Activated CD4-positive, alpha-beta T cell treated with anti-CD3 and anti-CD28 coated beads, Interleukin-2, amount 10 ng/mL, durations not matched to agents 24 days and 14 days (primary cell): ENCODE measurements at regions of chr9 and their contacts with region 1.

Region 1: DNA sequence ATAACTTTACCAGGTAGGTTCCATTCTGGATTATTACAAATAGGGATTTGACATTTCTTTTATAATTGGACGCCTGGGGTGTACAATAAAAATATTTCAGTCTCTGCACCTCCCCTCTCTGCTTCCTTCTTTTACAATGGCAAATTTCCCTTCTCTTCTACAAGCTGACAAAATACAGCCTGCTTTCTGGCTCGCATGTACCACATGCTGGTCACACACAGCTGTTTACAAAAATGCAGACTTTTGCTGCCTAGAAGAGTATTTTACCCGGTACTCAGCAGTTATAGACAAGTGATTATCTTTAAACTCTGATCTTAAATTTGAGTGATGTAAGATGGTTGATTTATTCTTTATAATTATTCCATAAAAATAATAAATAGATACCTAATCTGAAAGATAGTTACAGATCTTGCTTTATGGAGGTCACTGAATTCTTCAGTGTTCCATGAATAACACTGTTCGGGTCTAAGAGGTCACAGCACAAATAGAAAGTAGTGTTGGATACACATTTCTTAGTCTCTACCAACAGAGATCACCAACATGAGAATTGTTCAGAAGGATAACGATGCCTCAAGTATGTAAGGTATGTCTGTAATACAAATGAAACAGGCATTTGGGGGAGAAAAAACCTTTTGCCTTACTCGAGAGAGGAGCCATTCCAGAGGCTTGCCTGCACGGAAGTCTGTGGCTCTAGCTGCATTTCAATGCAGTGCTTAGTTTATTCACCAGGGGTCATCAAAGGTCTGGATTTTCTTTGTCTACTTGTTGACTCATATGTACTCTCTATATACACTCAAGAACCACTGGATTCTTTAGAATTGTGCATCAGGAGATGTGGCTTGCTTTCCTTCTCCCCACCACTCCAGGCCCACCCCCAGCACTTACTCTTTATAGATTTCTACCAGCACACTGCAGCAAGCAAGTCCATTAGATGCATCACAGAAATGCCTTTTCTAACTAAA is 206.6 kb upstream of the RFX3 start:
- DNase-seq: peak; percentile 87
- H3K4me3 Mint-ChIP-seq: no peak overlapping the region
- H3K27ac Mint-ChIP-seq: no peak overlapping the region
- H3K4me1 Mint-ChIP-seq: peaks cover 11% of the 10 kb centered on the region
- H3K27me3 Mint-ChIP-seq: no peaks in the 10 kb centered on the region

Region 2: DNA sequence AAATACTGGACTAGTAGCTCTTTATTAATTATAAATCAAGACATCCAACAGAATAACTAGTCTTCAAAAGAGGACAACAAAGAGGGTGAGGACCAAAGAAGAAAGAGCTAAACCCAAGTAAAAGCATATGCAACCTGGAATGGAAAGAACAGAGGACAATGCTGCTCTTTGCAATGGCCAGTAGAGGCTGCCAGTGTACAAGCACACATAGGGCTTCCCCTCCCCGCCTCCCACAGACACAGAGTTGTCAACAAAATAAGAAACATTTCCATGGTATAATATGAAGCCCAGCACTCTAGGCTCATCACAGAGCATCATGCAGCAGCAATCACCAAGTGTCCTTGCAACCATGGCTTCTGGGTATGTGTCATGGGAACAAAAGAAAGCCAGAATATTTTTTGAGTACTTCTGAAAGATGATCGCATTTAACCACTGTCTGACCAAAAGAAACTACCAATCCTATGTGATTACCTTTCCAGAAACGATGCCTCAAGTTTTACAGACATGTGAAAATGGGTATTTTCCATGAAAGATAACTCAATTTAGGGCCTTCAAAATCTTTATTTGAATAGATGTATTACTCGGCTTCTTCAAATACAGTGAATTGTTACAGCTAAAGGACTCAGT is 264.7 kb before region 1 on chr9:
- intact Hi-C with region 1: loop called (anchors 5 kb)
- DNase-seq: peak; percentile 86
- H3K4me3 Mint-ChIP-seq: no peak overlapping the region
- H3K27ac Mint-ChIP-seq: no peak overlapping the region
- H3K4me1 Mint-ChIP-seq: peaks cover 4% of the 10 kb centered on the region
- H3K27me3 Mint-ChIP-seq: no peaks in the 10 kb centered on the region

Region 3: GRCh38 chr9:3508521-3509291 is 223.7 kb before region 1 on chr9:
- intact Hi-C with region 1: no loop called
- DNase-seq: no peak
- H3K4me3 Mint-ChIP-seq: peak overlapping the region; percentile 36
- H3K27ac Mint-ChIP-seq: peak overlapping the region; percentile 48
- H3K4me1 Mint-ChIP-seq: peaks cover 27% of the 10 kb centered on the region
- H3K27me3 Mint-ChIP-seq: no peaks in the 10 kb centered on the region

Region 4: DNA sequence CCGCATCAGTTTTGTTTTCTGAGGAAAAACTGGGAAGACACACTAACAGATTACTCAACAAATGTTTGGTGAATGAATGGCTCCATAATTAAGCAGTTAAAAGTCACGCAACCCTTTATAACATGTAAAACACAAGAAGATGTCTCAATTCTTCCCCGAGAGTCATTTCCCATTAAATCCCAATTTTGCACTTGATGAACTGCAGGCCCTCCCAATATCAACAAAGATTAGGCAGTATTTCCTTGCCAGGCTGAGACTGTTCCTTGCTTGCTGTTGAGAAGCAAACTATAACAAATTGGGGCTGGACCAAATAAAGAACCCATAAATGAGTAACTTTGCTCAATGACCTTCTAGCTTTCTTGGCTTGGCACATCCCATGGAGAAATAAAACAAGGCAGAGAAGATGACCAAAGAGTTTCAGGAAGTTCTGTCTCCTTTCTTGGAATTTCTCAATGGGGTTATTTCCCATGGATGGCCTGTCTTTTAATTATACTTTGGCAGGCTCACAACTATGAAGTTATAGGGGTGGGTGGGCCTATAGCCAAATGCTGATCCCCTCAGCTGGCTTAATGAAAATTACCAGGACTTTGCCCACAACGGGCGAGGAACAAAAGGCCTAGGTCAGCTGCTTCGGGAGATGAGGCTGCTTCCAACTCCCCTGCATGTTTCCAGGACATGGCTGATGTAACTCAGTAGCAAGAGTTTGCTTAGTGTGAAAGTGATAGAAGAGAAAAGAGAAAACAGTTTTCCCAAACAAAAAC is 36.5 kb after region 1 on chr9:
- intact Hi-C with region 1: no loop called
- DNase-seq: no peak
- H3K4me3 Mint-ChIP-seq: no peak overlapping the region
- H3K27ac Mint-ChIP-seq: no peak overlapping the region
- H3K4me1 Mint-ChIP-seq: no peaks in the 10 kb centered on the region
- H3K27me3 Mint-ChIP-seq: peaks cover 6% of the 10 kb centered on the region

Region 5: GRCh38 chr9:4117835-4118610 is 385.7 kb after region 1 on chr9:
- intact Hi-C with region 1: loop called (anchors 1 kb)
- DNase-seq: peak; percentile 79
- H3K4me3 Mint-ChIP-seq: no peak overlapping the region
- H3K27ac Mint-ChIP-seq: no peak overlapping the region
- H3K4me1 Mint-ChIP-seq: no peaks in the 10 kb centered on the region
- H3K27me3 Mint-ChIP-seq: no peaks in the 10 kb centered on the region

Region 6: DNA sequence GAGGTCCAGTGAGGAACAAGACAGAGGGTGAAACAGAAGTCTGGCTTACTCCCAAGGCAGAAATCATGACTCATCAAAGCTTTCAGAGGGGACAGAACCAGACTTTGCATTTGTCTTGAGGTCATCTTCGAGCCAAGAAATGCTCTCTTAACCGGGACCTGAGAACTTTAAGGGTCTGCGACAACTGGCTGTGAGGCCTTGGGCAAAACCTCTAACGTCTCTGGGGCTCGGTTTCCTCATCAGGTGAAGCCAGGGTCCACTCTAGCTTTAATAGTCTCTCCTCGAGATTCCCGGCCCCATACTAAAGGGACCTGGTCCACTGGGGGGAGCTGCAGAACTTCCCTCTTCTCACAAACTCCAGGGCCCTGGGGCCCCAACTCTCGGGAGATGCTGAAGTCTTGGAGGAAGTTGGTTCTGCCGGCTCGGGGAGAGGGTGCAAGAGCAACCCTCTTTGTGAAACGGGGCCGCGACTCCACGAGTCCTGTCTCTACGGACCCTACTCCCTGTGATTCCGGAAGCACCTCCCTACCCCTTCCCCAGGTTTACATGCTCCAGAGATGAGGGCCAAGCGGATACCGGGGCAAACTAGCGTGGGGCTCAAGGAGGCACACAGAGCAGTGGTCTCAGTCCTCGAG is 564.9 kb after region 1 on chr9:
- intact Hi-C with region 1: loop called (anchors 5 kb)
- DNase-seq: peak; percentile 78
- H3K4me3 Mint-ChIP-seq: peak overlapping the region; percentile 99
- H3K27ac Mint-ChIP-seq: peak overlapping the region; percentile 91
- H3K4me1 Mint-ChIP-seq: peaks cover 29% of the 10 kb centered on the region
- H3K27me3 Mint-ChIP-seq: peaks cover 69% of the 10 kb centered on the region

Region 7: DNA sequence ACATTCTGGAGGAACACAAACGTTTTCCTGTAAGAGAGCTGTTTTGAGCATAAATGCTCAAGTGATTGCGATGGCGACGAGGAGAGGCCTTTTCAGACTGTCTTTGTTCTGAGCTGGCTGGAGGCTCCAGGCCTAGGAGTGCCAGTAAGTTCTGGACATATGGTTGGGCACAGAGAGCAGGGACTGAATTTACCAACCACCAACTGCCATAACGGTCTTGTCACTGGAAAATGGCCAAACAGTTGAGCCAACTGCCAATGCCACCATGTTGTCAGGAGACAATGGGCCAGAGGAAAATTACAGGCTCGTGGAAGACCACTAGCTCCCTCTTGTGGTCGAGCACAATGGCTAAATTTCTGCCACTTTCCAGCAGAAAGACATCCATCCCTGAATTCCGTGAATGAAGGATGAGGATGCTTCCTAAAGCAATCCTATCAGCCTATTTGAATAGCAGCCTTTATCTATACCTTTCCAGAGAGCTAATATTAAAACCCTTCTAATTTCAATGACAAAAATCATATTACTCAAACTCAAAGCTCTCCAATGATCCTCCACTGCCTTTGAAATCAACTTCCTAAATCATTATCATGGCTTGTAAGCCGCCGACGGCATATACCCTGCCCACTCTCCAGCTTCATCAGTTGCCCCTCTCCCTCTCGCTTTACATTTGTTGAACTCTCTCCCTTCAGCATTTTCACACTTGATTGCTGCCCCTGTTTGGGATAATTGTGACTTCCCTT is 634.4 kb after region 1 on chr9:
- intact Hi-C with region 1: loop called (anchors 1 kb)
- DNase-seq: peak; percentile 71
- H3K4me3 Mint-ChIP-seq: no peak overlapping the region
- H3K27ac Mint-ChIP-seq: no peak overlapping the region
- H3K4me1 Mint-ChIP-seq: peaks cover 3% of the 10 kb centered on the region
- H3K27me3 Mint-ChIP-seq: peaks cover 11% of the 10 kb centered on the region